GM12878 (cell line): ENCODE measurements at regions of chr2 and their contacts with region 1.

Region 1: GRCh38 chr2:65064728-65065552 is 8.7 kb downstream of the CEP68 start:
- DNase-seq: peak; percentile 86
- ATAC-seq: peak; percentile 89
- H3K4me3 ChIP-seq: peak overlapping the region; percentile 35; the same call in 1 of the 2 replicates
- H3K27ac ChIP-seq: peak overlapping the region; percentile 53; the same call in 1 of the 2 replicates
- H3K4me1 ChIP-seq: peaks cover 12% of the 10 kb centered on the region
- H3K27me3 ChIP-seq: no peaks in the 10 kb centered on the region
- CTCF ChIP-seq: peak; percentile 87 to 98 (median 97)
- EP300 ChIP-seq: no peak
- POLR2A ChIP-seq: 0 out of 2 replicates have a peak, but pooled peaks have one; percentile 29
- RAD21 ChIP-seq: peak; percentile 98

Region 2: GRCh38 chr2:64101141-64101591 is 963.8 kb before region 1 on chr2:
- CTCF ChIA-PET with region 1: no interaction called
- POLR2A ChIA-PET with region 1: no interaction called
- RAD21 ChIA-PET with region 1: no interaction called
- SMC1A ChIA-PET with region 1: no interaction called
- in situ Hi-C with region 1: no loop called
- intact Hi-C with region 1: no loop called
- DNase-seq: no peak
- ATAC-seq: peak; percentile 68
- H3K4me3 ChIP-seq: peak overlapping the region; percentile 26; the same call in 1 of the 2 replicates
- H3K27ac ChIP-seq: peak overlapping the region; percentile 80
- H3K4me1 ChIP-seq: peaks cover 46% of the 10 kb centered on the region
- H3K27me3 ChIP-seq: no peaks in the 10 kb centered on the region
- CTCF ChIP-seq: no peak
- EP300 ChIP-seq: no peak
- POLR2A ChIP-seq: no peak
- RAD21 ChIP-seq: no peak

Region 3: GRCh38 chr2:64141674-64142405 is 923.1 kb before region 1 on chr2:
- CTCF ChIA-PET with region 1: no interaction called
- POLR2A ChIA-PET with region 1: no interaction called
- RAD21 ChIA-PET with region 1: no interaction called
- SMC1A ChIA-PET with region 1: no interaction called
- in situ Hi-C with region 1: no loop called
- intact Hi-C with region 1: no loop called
- DNase-seq: no peak
- ATAC-seq: no peak; the same call in 2 of the 3 replicates
- H3K4me3 ChIP-seq: peak overlapping the region; percentile 95
- H3K27ac ChIP-seq: peak overlapping the region; percentile 85
- H3K4me1 ChIP-seq: peaks cover 20% of the 10 kb centered on the region
- H3K27me3 ChIP-seq: no peaks in the 10 kb centered on the region
- CTCF ChIP-seq: no peak
- EP300 ChIP-seq: no peak
- POLR2A ChIP-seq: no peak
- RAD21 ChIP-seq: no peak

Region 4: DNA sequence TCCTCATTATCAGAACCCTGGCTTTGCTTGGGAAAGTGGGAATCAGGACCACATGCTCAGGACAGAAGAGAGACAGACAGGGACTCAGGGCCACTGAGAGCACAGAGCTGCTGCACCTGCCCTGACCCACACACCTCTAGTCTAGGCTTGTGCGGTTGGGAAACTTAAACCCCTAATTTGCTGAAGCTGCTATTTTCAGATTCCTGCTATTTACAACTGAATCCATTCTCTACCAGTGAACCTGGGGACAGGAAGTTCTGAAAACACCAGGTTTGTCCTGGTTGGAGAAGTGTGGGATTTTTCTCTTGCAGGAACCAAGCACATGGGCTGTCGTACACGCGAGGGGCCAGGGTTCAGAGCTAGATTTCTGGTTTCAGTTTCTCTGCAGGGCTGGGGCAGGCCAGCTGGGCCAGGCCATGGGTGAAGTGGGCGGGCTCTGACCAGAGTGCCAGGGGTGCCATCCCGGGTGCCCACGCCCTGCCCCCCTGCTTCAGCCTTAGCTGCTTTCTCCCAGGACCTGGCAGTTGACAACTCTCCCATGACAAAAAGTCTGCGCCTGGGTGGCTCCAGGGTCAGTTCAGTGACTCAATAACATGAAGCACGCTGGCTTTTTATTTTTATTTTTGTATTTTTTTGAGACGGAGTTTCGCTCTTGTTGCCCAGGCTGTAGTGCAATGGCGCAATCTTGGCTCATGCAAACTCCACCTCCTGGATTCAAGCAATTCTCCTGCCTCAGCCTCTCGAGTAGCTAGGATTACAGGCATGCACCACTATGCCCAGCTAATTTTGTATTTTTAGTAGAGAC is 127.1 kb before region 1 on chr2:
- CTCF ChIA-PET with region 1: no interaction called
- POLR2A ChIA-PET with region 1: no interaction called
- RAD21 ChIA-PET with region 1: no interaction called
- SMC1A ChIA-PET with region 1: no interaction called
- in situ Hi-C with region 1: no loop called
- intact Hi-C with region 1: no loop called
- DNase-seq: peak; percentile 77
- ATAC-seq: peak; percentile 70
- H3K4me3 ChIP-seq: peak overlapping the region; percentile 76
- H3K27ac ChIP-seq: peak overlapping the region; percentile 92
- H3K4me1 ChIP-seq: peaks cover 67% of the 10 kb centered on the region
- H3K27me3 ChIP-seq: no peaks in the 10 kb centered on the region
- CTCF ChIP-seq: no peak
- EP300 ChIP-seq: peak in 1 of 2 experiments; percentile 12; a peak in 1 of 4 replicates
- POLR2A ChIP-seq: peak; percentile 60
- RAD21 ChIP-seq: no peak

Region 5: DNA sequence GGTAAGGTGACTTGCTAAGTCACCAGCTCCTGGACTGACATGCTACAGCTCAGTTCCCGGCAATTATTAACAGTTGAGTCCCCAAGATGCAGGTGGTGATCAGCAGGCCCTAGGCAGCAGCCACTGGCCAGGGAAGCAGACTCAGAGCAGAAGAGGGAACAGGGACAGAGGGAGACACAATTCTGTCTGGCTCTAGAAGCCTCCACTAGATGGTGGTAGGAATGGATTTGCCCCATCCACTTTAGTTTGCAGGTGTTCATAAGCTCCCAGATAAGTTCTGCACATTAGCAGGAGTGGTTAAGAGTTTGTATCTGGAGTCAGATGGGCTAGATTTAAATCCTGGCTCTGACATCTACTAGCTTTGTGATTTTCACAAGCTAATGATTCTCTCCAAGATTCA is 101.2 kb before region 1 on chr2:
- CTCF ChIA-PET with region 1: no interaction called
- POLR2A ChIA-PET with region 1: no interaction called
- RAD21 ChIA-PET with region 1: no interaction called
- SMC1A ChIA-PET with region 1: no interaction called
- in situ Hi-C with region 1: no loop called
- intact Hi-C with region 1: no loop called
- DNase-seq: no peak
- ATAC-seq: no peak; the same call in 2 of the 3 replicates
- H3K4me3 ChIP-seq: no peak overlapping the region
- H3K27ac ChIP-seq: no peak overlapping the region
- H3K4me1 ChIP-seq: no peaks in the 10 kb centered on the region
- H3K27me3 ChIP-seq: no peaks in the 10 kb centered on the region
- CTCF ChIP-seq: 0 out of 6 replicates have a peak, but pooled peaks of 1 of the 3 experiments have one; percentile 6
- EP300 ChIP-seq: no peak
- POLR2A ChIP-seq: no peak
- RAD21 ChIP-seq: 0 out of 2 replicates have a peak, but pooled peaks have one; percentile 17

Region 6: DNA sequence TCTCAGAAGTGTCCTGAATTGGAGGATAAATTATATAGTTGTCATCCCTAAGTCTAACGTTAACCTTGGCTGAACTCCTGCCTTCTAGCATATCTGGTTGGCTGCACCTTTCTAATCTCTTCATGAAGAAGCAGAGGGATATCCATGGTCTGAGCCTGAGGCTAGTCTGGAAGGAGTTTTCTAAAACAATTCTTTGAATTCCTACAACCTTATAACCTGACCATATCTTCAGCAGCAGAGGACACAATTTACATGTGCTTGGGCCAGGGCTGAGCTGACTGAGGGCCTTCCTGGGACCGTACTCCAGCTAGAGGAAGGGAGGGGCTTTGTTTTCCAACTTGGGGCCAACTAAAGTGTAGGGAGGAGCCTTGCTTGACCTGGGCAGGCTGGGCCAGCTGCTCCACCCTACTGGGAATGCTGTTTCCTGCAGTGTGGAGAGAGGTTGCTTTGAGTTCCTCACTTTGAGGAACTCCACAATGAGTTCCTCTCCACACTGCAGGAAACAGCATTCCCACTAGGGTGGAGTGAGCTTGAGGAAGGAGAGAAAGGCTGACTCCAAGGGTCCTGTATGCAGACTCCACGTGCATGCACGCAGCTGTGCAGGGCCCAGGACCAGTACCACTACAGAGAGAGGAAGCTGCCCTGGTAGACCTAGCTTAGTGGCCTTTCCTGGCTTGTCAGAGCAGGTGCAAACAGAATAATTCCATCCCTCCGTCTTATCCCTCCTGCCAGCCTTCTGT is 10.8 kb after region 1 on chr2:
- CTCF ChIA-PET with region 1: interaction called, 35 read pairs
- POLR2A ChIA-PET with region 1: interaction called, 3 read pairs
- RAD21 ChIA-PET with region 1: interaction called, 6 read pairs
- SMC1A ChIA-PET with region 1: interaction called, 13 read pairs
- in situ Hi-C with region 1: no loop called
- intact Hi-C with region 1: no loop called
- DNase-seq: no peak
- ATAC-seq: no peak
- H3K4me3 ChIP-seq: no peak overlapping the region
- H3K27ac ChIP-seq: no peak overlapping the region
- H3K4me1 ChIP-seq: peaks cover 10% of the 10 kb centered on the region
- H3K27me3 ChIP-seq: no peaks in the 10 kb centered on the region
- CTCF ChIP-seq: no peak
- EP300 ChIP-seq: no peak
- POLR2A ChIP-seq: no peak
- RAD21 ChIP-seq: no peak

Region 7: GRCh38 chr2:65129826-65130663 is 65.1 kb after region 1 on chr2 and contains the start of gene RAB1A:
- CTCF ChIA-PET with region 1: interaction called, 28 read pairs
- POLR2A ChIA-PET with region 1: interaction called, 8 read pairs
- RAD21 ChIA-PET with region 1: interaction called, 36 read pairs
- SMC1A ChIA-PET with region 1: interaction called, 33 read pairs
- in situ Hi-C with region 1: no loop called
- intact Hi-C with region 1: loop called (anchors 2 kb)
- DNase-seq: peak; percentile 97
- ATAC-seq: peak; percentile 95
- H3K4me3 ChIP-seq: peak within 1 kb of the TSS; percentile 93
- H3K27ac ChIP-seq: peak within 1 kb of the TSS; percentile 87
- H3K4me1 ChIP-seq: no peaks in the 10 kb centered on the region
- H3K27me3 ChIP-seq: no peaks in the 10 kb centered on the region
- CTCF ChIP-seq: peak; percentile 38 to 58 (median 40); a peak in 5 of 6 replicates
- EP300 ChIP-seq: 0 out of 4 replicates have a peak, but pooled peaks of 1 of the 2 experiments have one; percentile 44
- POLR2A ChIP-seq: peak; percentile 93
- RAD21 ChIP-seq: peak; percentile 50
- polyA plus RNA-seq, gene RAB1A: 48.9 to 71.2 TPM

Region 8: GRCh38 chr2:65164426-65164891 is 99.5 kb after region 1 on chr2:
- CTCF ChIA-PET with region 1: interaction called, 97 read pairs
- POLR2A ChIA-PET with region 1: interaction called, 14 read pairs
- RAD21 ChIA-PET with region 1: interaction called, 46 read pairs
- SMC1A ChIA-PET with region 1: interaction called, 26 read pairs
- in situ Hi-C with region 1: loop called (anchors 10 kb)
- intact Hi-C with region 1: loop called (anchors 1 kb)
- DNase-seq: no peak
- ATAC-seq: no peak
- H3K4me3 ChIP-seq: no peak overlapping the region
- H3K27ac ChIP-seq: no peak overlapping the region
- H3K4me1 ChIP-seq: peaks cover 3% of the 10 kb centered on the region; the same call in 1 of the 2 replicates
- H3K27me3 ChIP-seq: no peaks in the 10 kb centered on the region
- CTCF ChIP-seq: no peak
- EP300 ChIP-seq: no peak
- POLR2A ChIP-seq: no peak
- RAD21 ChIP-seq: no peak

Region 9: GRCh38 chr2:65186872-65187851 is 122.2 kb after region 1 on chr2:
- CTCF ChIA-PET with region 1: interaction called, 117 read pairs
- POLR2A ChIA-PET with region 1: interaction called, 3 read pairs
- RAD21 ChIA-PET with region 1: interaction called, 35 read pairs
- SMC1A ChIA-PET with region 1: interaction called, 56 read pairs
- in situ Hi-C with region 1: loop called (anchors 5 kb)
- intact Hi-C with region 1: loop called (anchors 1 kb)
- DNase-seq: no peak
- ATAC-seq: peak; percentile 98
- H3K4me3 ChIP-seq: no peak overlapping the region
- H3K27ac ChIP-seq: no peak overlapping the region
- H3K4me1 ChIP-seq: no peaks in the 10 kb centered on the region
- H3K27me3 ChIP-seq: no peaks in the 10 kb centered on the region; a peak in 1 of 4 replicates
- CTCF ChIP-seq: peak; percentile 77 to 82 (median 80)
- EP300 ChIP-seq: no peak
- POLR2A ChIP-seq: no peak
- RAD21 ChIP-seq: peak; percentile 82

Region 10: DNA sequence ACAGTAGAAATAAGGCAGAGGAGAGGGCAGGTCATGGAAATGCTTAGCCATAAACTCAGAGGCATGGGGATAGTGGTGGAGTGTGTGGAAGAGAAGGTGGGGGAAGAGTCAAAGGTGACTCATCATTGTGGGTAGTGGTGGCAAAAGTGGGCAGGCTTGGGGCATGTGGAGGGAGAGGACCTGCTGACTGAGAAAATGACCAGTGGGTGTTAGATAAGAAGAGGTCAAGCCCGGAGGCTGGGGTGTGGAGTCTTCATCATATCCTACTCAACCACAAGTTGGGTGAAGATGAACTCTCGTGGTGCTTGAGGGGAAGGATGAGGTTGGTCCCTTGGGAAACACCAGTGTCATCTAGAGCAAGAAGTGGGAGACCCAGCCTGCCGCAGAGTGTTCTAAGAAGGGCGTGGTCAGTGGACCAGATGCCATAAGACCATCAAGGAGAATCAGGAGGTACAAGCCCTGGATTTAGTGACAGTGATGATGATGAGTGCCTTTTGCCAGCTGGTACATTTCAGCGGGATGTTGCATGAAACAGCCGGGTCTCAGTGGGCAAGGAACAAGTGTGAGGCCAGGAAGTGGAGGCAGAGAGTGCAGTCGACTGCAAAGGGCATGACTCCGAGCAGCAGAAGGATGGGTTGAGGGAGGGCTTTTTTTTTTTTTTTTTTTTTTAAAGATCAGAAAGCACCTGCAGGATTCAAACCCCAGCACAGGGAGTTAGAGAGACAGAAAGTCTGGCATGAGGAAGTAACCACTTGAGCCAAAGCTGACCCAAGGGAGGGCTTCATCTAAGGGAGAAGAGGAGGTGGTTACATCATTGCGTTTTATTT is 490.0 kb after region 1 on chr2:
- CTCF ChIA-PET with region 1: interaction called, 7 read pairs
- POLR2A ChIA-PET with region 1: no interaction called
- RAD21 ChIA-PET with region 1: interaction called, 3 read pairs
- SMC1A ChIA-PET with region 1: interaction called, 5 read pairs
- in situ Hi-C with region 1: loop called (anchors 5 kb)
- intact Hi-C with region 1: loop called (anchors 5 kb)
- DNase-seq: peak; percentile 42
- ATAC-seq: peak; percentile 83
- H3K4me3 ChIP-seq: no peak overlapping the region
- H3K27ac ChIP-seq: no peak overlapping the region
- H3K4me1 ChIP-seq: peaks cover 14% of the 10 kb centered on the region
- H3K27me3 ChIP-seq: no peaks in the 10 kb centered on the region; a peak in 1 of 4 replicates
- CTCF ChIP-seq: no peak
- EP300 ChIP-seq: no peak
- POLR2A ChIP-seq: no peak
- RAD21 ChIP-seq: no peak